ENCODE measurements at regions of chr2 and their contacts with region 1.

Region 1: DNA sequence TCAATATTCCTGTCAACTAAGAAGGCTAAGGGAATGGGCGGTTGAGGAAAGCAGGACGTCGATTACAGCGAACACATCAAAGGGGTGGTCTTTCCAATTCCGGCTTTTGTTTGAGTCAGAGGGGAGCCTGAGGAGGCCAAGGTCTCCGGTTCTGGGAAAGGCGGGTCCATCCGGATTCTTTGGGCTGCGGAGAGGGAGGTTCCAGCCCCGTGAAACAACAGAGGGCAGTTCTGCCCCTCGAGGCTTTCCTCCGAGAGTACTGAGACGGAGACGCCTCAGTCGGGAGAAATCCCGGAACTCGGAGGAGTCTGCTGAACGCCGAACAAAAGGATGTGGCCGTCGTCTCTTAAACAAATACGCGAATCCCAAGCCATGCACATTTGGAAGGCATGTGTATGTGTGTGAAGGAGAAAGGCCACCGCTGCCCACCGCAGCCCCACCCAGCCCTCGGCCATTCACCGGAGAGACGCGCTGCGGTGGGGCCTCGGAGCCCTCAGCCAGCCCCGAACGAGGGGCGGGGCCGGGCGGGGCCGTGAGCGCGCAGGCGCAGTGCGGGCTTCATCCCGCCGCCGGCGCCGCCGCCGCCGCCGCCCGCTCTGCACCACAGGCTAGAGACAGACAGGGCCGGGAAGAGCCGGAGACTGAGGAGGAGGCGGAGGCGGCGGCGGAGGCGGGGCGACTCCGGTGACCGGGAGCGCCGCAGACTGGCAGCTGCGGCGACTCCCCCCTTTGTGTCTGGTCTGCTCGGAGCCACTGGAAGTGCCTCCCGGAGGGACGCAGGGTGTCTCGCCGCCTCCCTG is at the start of gene BMPR2:
- DNase-seq: peak; percentile 89
- H3K4me3 Mint-ChIP-seq: peak within 1 kb of the TSS; percentile 83
- H3K27ac Mint-ChIP-seq: peak within 1 kb of the TSS; percentile 95
- H3K4me1 Mint-ChIP-seq: peaks cover 9% of the 10 kb centered on the region
- H3K27me3 Mint-ChIP-seq: no peaks in the 10 kb centered on the region
- CTCF ChIP-seq: no peak
- total RNA-seq, gene BMPR2: 27.4 and 30.5 TPM in 2 replicates

Region 2: DNA sequence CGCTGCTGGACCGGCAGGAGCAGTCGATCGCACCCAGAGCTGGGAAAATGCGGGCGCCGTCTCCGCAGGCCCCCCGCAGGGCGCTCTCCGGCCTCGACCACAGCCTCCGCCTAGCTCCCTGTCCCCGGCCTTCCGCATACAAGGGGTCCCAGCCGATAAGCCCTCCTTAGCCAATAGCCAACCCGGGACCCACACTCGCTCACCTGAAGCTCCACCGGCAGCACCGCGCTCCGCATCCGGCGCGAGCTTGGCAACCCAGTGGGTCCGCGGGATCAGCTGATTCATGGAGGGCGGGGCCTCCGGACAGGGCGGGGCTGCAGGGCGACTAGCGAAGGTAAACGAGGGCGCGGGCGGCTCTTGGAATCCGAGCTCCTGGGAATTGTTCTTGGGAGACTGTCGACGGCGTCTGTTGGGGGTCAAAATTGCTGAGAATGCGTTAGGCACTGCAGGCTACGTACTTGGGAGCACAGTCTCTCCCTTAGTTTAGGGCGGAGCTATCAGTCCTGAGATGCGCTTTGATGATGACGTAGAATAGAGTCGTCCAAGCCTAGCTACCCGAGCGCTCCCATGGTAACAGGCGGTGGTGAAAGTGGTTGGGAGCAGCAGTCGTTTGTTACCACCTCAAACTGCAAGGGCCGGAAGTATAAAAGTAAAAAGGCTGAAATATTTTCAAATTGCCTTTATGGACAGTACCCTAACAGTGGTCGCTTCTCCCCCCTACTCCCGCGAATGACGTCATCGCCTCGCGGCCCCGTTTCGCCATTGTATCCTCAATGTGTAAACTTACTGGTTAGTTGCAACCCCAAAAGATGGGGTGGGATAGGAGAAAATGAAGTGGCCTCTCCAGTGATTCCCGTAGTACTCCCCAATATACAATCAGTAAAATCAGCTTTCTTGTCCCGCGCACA is 594.9 kb before region 1 on chr2 and contains the start of gene ALS2:
- CTCF ChIA-PET with region 1: no interaction called
- POLR2A ChIA-PET with region 1: interaction called, 4 read pairs
- intact Hi-C with region 1: loop called (anchors 10 kb)
- DNase-seq: peak; percentile 98
- H3K4me3 Mint-ChIP-seq: peak within 1 kb of the TSS; percentile 95
- H3K27ac Mint-ChIP-seq: peak within 1 kb of the TSS; percentile 97
- H3K4me1 Mint-ChIP-seq: peaks cover 13% of the 10 kb centered on the region
- H3K27me3 Mint-ChIP-seq: no peaks in the 10 kb centered on the region
- CTCF ChIP-seq: no peak
- total RNA-seq, gene ALS2: 14.6 and 20.7 TPM in 2 replicates

Region 3: GRCh38 chr2:201858281-201859184 is 517.3 kb before region 1 on chr2:
- CTCF ChIA-PET with region 1: no interaction called
- POLR2A ChIA-PET with region 1: no interaction called
- intact Hi-C with region 1: no loop called
- DNase-seq: no peak
- H3K4me3 Mint-ChIP-seq: no peak overlapping the region
- H3K27ac Mint-ChIP-seq: no peak overlapping the region
- H3K4me1 Mint-ChIP-seq: peaks cover 16% of the 10 kb centered on the region
- H3K27me3 Mint-ChIP-seq: no peaks in the 10 kb centered on the region
- CTCF ChIP-seq: no peak

Region 4: DNA sequence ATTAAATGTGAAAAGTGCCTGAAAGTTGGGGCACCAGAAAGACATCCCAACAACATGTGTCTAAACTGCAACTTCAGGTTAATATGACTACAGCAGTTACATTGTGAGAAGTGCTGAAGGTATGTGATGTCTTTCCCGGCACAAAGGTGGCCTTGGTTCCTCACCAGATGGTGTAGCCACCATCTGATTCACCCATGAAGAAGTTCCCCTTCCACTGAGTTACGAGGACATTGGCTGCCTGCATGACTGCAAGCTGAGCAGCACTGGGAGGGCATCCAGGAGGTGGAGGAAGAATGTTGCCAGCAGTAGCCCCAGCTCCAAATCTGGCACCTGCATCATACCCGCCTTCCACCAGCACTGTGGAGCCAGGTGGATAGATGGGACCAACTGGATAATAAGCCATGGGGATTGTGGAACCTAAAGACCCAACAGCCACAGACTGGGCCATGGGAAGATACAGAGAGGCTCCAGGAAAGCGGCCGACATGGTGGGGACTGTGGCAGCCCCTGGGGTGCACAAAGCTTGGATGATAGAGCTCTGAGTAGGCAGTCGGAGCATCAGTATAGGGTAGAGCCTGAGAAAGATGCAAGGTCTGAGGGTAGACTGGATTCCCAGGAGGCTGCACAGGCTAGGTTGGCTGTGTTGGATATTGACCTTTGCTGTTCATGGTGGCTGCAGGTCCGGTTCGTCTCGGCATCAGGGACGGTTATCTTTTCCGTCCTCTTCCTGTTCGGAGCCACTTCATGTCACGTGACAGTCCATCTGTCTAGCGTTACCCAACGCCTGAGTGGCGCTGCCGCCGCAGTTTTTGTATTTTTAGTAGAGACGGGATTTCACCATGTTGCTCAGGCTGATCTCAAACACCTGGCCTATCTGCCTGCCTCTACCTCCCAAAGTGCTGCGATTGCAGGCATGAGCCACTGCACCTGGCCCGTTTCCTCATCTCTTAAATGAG is 174.3 kb before region 1 on chr2:
- CTCF ChIA-PET with region 1: no interaction called
- POLR2A ChIA-PET with region 1: no interaction called
- intact Hi-C with region 1: no loop called
- DNase-seq: no peak
- H3K4me3 Mint-ChIP-seq: no peak overlapping the region
- H3K27ac Mint-ChIP-seq: no peak overlapping the region
- H3K4me1 Mint-ChIP-seq: no peaks in the 10 kb centered on the region
- H3K27me3 Mint-ChIP-seq: no peaks in the 10 kb centered on the region
- CTCF ChIP-seq: no peak

Region 5: DNA sequence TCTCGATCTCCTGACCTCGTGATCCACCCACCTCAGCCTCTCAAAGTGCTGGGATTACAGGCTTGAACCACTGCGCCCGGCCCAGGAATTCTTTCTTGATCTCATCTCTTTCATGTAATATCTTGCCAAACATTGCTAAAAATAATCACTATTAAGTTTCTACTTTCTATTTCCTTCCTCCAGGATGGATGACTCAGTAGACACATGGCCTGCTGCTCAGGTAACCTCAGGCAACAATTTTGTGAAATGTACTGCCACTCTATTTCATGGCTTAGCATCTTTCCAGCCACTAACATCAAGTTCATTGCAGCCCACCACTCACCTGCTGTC is 126.3 kb before region 1 on chr2:
- CTCF ChIA-PET with region 1: no interaction called
- POLR2A ChIA-PET with region 1: no interaction called
- intact Hi-C with region 1: no loop called
- DNase-seq: peak; percentile 82
- H3K4me3 Mint-ChIP-seq: peak overlapping the region; percentile 72
- H3K27ac Mint-ChIP-seq: peak overlapping the region; percentile 98
- H3K4me1 Mint-ChIP-seq: peaks cover 8% of the 10 kb centered on the region
- H3K27me3 Mint-ChIP-seq: no peaks in the 10 kb centered on the region
- CTCF ChIP-seq: no peak

Region 6: DNA sequence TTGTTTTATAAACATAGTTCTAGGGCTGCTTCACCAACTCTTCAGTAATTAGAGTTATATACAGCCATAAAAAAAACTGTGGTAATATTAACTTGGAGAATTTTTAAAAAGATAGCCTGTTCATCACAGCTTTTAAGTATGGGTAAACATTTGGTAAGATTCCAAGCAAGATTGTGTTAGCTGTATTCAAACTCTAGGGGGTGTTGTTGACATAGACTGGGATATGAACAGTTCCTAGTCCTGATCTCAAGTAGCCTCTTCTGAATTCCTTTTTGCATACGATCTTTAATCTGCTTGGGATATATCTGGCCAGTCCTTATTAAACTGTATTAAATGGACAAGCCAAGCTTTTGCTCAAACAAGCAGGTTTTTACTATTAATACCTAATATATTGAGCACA is 96.9 kb before region 1 on chr2:
- CTCF ChIA-PET with region 1: interaction called, 5 read pairs
- POLR2A ChIA-PET with region 1: interaction called, 15 read pairs
- intact Hi-C with region 1: loop called (anchors 2 kb)
- DNase-seq: peak; percentile 56
- H3K4me3 Mint-ChIP-seq: no peak overlapping the region
- H3K27ac Mint-ChIP-seq: peak overlapping the region; percentile 57
- H3K4me1 Mint-ChIP-seq: peaks cover 16% of the 10 kb centered on the region
- H3K27me3 Mint-ChIP-seq: no peaks in the 10 kb centered on the region
- CTCF ChIP-seq: peak; percentile 41

Region 7: GRCh38 chr2:202317080-202317857 is 58.5 kb before region 1 on chr2:
- CTCF ChIA-PET with region 1: interaction called, 3 read pairs
- POLR2A ChIA-PET with region 1: interaction called, 12 read pairs
- intact Hi-C with region 1: no loop called
- DNase-seq: peak; percentile 95
- H3K4me3 Mint-ChIP-seq: no peak overlapping the region
- H3K27ac Mint-ChIP-seq: no peak overlapping the region
- H3K4me1 Mint-ChIP-seq: peaks cover 16% of the 10 kb centered on the region
- H3K27me3 Mint-ChIP-seq: no peaks in the 10 kb centered on the region
- CTCF ChIP-seq: no peak

Region 8: DNA sequence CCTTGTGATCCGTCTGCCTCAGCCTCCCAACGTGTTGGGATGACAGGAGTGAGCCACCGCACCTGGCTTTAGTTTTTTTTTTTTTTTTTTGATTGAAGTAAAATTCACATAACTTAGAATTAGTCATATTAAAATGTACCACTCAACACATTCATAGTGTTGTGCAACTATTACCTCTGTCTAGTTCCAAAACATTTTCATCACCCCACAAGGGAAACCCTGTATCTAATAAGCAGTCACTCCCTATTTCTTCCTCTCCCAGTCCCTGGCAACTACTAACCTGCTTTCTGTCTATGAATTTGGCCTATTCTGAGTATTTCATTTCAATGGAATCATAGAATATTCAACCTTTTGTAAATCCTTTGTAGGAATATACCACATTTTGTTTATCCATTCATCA is 135.1 kb after region 1 on chr2:
- CTCF ChIA-PET with region 1: no interaction called
- POLR2A ChIA-PET with region 1: no interaction called
- intact Hi-C with region 1: loop called (anchors 2 kb)
- DNase-seq: peak; percentile 71
- H3K4me3 Mint-ChIP-seq: no peak overlapping the region
- H3K27ac Mint-ChIP-seq: peak overlapping the region; percentile 21
- H3K4me1 Mint-ChIP-seq: peaks cover 9% of the 10 kb centered on the region
- H3K27me3 Mint-ChIP-seq: no peaks in the 10 kb centered on the region
- CTCF ChIP-seq: no peak